Mammary epithelial cell (primary cell): ENCODE measurements at regions of chr7 and their contacts with region 1.

Region 1: DNA sequence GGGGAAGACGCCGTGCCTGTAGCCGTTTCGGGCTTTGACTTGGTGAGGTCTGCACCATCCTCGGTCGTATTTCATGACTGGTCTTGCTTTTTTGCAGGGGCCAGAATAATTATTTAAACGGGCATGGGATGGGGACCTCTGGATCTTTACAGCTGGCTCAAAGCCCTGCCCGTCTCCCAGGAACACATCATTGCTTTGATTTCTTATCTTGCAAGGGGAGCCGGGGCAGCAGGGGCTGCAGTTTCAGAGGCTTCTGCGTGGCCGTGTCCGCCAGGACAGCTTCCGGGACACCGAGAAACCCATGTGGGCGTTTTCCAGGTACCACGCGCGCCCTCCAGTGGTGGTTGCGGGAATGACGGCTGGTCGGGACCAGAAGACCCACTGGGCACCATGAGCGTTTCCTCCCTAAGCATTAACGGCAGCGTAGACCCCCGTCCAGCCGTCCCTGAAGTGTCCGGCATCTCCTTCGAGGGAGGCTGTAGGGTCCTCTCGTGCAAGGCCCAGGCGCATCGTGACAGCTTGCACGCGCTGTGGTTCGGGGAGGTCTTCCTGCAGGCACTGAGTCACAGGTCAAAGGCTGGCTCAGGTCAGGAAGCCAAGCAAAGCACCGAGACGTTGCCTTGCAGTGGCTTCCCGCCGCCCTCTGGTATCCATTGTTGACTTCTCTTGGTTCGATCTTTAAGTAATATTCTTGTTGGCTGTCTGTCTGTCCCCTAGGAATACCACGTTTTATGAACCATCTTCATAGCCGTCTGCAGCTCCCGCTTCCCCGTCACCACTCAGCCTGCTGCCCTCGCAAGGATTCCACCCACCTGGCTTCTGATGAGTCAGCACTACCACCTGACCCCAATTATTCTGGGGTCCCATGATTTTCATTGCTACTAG is 16.2 kb upstream of the ZFAND2A start:
- DNase-seq: peak; percentile 40
- H3K4me3 ChIP-seq: peak overlapping the region in 1 of 3 experiments; percentile 21
- H3K27ac ChIP-seq: no peak overlapping the region
- H3K4me1 ChIP-seq: peaks cover 8% of the 10 kb centered on the region
- H3K27me3 ChIP-seq: no peaks in the 10 kb centered on the region
- CTCF ChIP-seq: peak; percentile 82 to 94

Region 2: GRCh38 chr7:1086588-1087464 is 89.4 kb before region 1 on chr7:
- CTCF ChIA-PET with region 1: no interaction called
- dilution Hi-C with region 1: no loop called
- in situ Hi-C with region 1: no loop called
- intact Hi-C with region 1: loop called (anchors 2 kb)
- DNase-seq: peak; percentile 71
- H3K4me3 ChIP-seq: peak overlapping the region; percentile 38 to 45 (median 43)
- H3K27ac ChIP-seq: peak overlapping the region; percentile 50
- H3K4me1 ChIP-seq: peaks cover 21% of the 10 kb centered on the region
- H3K27me3 ChIP-seq: no peaks in the 10 kb centered on the region
- CTCF ChIP-seq: peak; percentile 53 to 85

Region 3: DNA sequence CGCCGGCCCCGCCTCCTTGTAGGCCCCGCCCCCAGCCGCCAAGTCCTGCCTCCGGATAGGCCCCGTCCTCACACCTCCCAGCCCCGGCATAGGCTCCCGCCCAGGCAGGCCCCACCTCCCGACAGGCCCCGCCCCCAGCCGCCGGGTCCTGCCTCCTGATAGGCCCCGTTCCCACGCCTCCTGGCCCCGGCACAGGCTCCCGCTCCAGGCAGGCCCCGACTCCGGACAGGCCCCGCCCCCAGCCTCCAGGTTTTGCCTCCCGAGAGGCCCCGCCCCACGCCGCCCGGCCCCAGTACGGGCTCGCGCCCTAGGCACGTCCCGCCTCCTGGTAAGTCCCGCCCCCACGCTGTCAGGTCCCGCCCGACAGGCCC is 283.3 kb after region 1 on chr7:
- CTCF ChIA-PET with region 1: no interaction called
- dilution Hi-C with region 1: no loop called
- in situ Hi-C with region 1: loop called in 1 of 2 experiments (anchors 25 kb)
- intact Hi-C with region 1: no loop called
- DNase-seq: peak; percentile 98
- H3K4me3 ChIP-seq: peak overlapping the region; percentile 91 to 96 (median 95)
- H3K27ac ChIP-seq: no peak overlapping the region
- H3K4me1 ChIP-seq: peaks cover 64% of the 10 kb centered on the region
- H3K27me3 ChIP-seq: no peaks in the 10 kb centered on the region
- CTCF ChIP-seq: no peak